A549 (cell line): ENCODE measurements at regions of chr3 and their contacts with region 1.

Region 1: GRCh38 chr3:129195731-129196256 is 12.1 kb upstream of the CNBP start:
- DNase-seq: peak in 1 of 2 experiments; percentile 55
- ATAC-seq: peak; percentile 96 to 98
- H3K4me3 ChIP-seq: no peak overlapping the region
- H3K27ac ChIP-seq: peak overlapping the region; percentile 77 to 88
- H3K4me1 ChIP-seq: peaks cover 29% of the 10 kb centered on the region
- CTCF ChIP-seq: no peak
- EP300 ChIP-seq: no peak
- POLR2A ChIP-seq: no peak
- RAD21 ChIP-seq: no peak

Region 2: DNA sequence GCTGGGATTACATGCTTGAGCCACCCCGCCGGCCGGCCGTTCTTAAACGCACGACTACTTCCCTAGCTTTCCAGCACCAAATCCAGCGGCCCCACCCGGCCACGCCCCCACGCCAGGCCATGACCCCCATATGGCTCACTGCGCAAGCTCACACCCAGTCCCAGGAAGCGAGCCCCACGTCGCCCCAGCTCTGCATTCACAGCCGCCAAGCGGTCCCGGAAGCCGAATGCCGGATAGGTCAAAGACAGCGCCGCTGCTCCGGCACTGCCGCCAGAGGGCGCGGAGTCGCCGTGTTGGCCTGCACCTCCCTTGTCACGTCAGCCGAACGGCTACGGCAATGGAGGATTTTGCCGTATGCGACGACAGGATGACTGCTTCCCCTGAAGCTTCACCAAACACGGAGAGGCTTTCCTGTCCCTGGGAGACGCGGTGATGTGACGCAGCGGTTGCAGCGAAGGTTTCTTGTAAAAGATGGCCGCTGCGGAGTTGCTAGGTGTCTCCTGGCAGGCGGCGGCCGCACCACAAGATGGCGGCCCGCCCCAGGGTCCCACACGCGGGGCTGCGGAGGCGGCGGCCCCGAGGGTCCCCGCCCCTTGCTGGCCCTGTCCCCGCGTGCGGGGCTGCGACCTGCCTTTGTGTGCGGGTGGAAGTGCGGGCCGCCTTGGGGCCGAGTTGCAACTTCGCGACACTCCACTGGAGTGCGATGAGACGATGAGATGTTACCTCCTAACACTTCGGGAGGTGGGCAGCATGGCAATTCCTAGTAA is 515.0 kb before region 1 on chr3:
- CTCF ChIA-PET with region 1: no interaction called
- POLR2A ChIA-PET with region 1: no interaction called
- DNase-seq: peak; percentile 91 to 98
- ATAC-seq: peak; percentile 98 to 99
- H3K4me3 ChIP-seq: peak overlapping the region; percentile 54
- H3K27ac ChIP-seq: peak overlapping the region; percentile 97 to 98
- H3K4me1 ChIP-seq: 0 out of 3 replicates have a peak, but pooled peaks cover 5% of the 10 kb centered on the region
- CTCF ChIP-seq: peak; percentile 88
- EP300 ChIP-seq: no peak
- POLR2A ChIP-seq: no peak; the same call in none of the 2 replicates
- RAD21 ChIP-seq: peak; percentile 62 to 78

Region 3: DNA sequence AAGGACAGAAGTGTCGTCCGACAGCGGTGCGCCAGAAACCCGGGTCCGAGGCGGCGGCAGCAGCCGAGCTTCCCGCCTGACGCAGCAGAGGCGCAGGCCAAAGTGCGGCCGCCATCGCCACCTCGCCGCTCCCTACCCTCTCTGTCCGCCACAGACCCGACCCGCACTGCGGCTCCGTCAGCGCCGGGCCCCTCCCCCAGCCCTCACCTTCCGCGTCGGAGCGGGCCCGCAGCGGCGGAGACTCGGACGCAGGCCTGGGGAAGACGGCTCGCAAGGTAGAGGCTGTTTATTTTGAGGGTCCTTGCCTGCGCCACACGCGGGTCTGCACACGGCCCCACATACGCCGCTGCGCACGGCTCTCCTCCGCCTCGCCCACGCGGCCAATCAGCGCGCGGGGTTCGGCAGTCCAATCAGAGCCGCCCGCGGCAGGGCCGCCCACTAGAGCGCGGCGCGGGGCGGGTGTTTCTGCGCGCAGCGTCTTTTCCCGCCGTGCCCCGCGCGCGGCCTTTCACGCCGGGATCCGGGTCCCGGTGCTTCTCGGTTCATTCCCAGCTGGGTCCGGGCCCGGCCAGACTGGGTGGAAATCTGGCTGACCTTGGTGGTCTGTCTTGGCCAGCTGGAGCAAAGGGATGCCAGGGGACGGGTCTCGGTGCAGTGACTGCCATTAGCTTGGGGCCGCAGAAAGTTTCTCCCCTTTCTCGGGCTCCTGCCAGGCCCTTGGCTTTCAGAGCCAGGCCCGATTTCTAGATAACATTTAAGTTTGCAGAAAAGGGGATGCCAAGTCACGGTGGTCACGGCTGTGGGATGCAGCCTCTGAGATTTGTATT is 12.0 kb before region 1 on chr3 and contains the start of gene CNBP:
- CTCF ChIA-PET with region 1: interaction called, 3 read pairs
- POLR2A ChIA-PET with region 1: interaction called, 13 read pairs
- DNase-seq: peak; percentile 86 to 94
- ATAC-seq: peak; percentile 99
- H3K4me3 ChIP-seq: peak within 1 kb of the TSS; percentile 98
- H3K27ac ChIP-seq: peak within 1 kb of the TSS; percentile 99 to 100
- H3K4me1 ChIP-seq: peaks cover 47% of the 10 kb centered on the region
- CTCF ChIP-seq: no peak
- EP300 ChIP-seq: no peak
- POLR2A ChIP-seq: peak; percentile 61
- RAD21 ChIP-seq: no peak
- polyA plus RNA-seq, gene CNBP: 309 and 365 TPM in 2 replicates

Region 4: DNA sequence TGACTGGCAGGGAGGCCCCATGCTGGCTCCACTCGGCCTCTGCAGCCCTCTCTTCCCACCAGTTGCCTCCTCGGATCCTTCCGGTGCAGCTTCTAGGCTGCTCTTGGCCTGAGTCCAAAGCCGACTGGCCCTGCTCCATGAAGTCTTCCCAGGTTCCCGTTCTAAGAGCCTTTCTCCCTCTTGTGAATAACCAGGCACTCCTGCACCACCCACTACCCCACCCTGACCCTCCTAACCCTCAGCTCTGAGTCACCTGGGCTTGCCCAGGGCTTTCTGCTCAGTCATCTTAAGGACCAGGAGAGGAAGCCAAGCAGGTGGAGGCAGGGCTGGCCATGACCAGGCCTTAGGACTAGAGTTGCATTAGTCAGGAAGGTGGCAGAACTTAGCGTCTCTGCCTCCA is 16.0 kb after region 1 on chr3:
- CTCF ChIA-PET with region 1: interaction called, 12 read pairs
- POLR2A ChIA-PET with region 1: interaction called, 9 read pairs
- DNase-seq: peak; percentile 82 to 96
- ATAC-seq: peak; percentile 99 to 100
- H3K4me3 ChIP-seq: no peak overlapping the region
- H3K27ac ChIP-seq: peak overlapping the region; percentile 86 to 89
- H3K4me1 ChIP-seq: peaks cover 20% of the 10 kb centered on the region
- CTCF ChIP-seq: no peak
- EP300 ChIP-seq: no peak
- POLR2A ChIP-seq: no peak
- RAD21 ChIP-seq: peak in 1 of 2 experiments; percentile 40; a peak in 2 of 5 replicates

Region 5: DNA sequence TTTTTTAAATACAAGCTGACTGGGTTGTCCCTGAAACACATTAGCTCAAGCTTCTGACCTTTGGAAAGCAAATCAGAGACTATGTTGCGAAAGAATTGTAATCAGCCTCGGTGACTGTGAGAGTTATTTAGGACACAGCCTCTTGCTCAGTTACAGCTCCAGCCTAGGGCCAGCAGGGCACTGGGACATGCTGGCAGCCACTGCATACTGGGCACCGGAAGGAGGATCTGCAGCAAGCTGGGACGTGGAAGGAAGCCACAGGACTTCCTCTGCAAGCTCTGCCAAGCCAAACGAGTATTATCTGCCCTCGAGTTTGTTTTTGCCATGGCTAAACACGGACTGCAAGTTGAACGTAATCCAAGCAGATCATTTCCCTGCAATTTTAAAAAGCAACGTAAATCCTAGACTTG is 29.2 kb after region 1 on chr3:
- CTCF ChIA-PET with region 1: interaction called, 4 read pairs
- POLR2A ChIA-PET with region 1: interaction called, 12 read pairs
- DNase-seq: peak; percentile 80 to 86
- ATAC-seq: peak; percentile 85 to 91
- H3K4me3 ChIP-seq: 0 out of 3 replicates have a peak overlapping the region, but pooled peaks have one; percentile 12
- H3K27ac ChIP-seq: peak overlapping the region; percentile 85 to 88
- H3K4me1 ChIP-seq: peaks cover 51% of the 10 kb centered on the region
- CTCF ChIP-seq: no peak
- EP300 ChIP-seq: no peak
- POLR2A ChIP-seq: peak; percentile 43
- RAD21 ChIP-seq: peak; percentile 7 to 23; a peak in 2 of 5 replicates

Region 6: GRCh38 chr3:129230311-129231019 is 34.7 kb after region 1 on chr3:
- CTCF ChIA-PET with region 1: interaction called, 4 read pairs
- POLR2A ChIA-PET with region 1: interaction called, 12 read pairs
- DNase-seq: peak in 1 of 2 experiments; percentile 79
- ATAC-seq: peak; percentile 79 to 81
- H3K4me3 ChIP-seq: no peak overlapping the region
- H3K27ac ChIP-seq: peak overlapping the region; percentile 85 to 88
- H3K4me1 ChIP-seq: peaks cover 55% of the 10 kb centered on the region
- CTCF ChIP-seq: no peak
- EP300 ChIP-seq: no peak
- POLR2A ChIP-seq: no peak
- RAD21 ChIP-seq: no peak